Gastrocnemius medialis (tissue), 4 donors: ENCODE measurements at regions of chr21 and their contacts with region 1.

Region 1: GRCh38 chr21:38355992-38356797 is 99.4 kb downstream of the KCNJ15 start:
- DNase-seq: peak; percentile 22 to 29
- ATAC-seq: peak; percentile 34 to 55
- H3K4me3 ChIP-seq: no peak overlapping the region
- H3K27ac ChIP-seq: no peak overlapping the region
- H3K4me1 ChIP-seq: no peaks in the 10 kb centered on the region
- H3K27me3 ChIP-seq: peaks cover 0 to 6% (median 0%) of the 10 kb centered on the region in 3 donors
- CTCF ChIP-seq: peak; percentile 62 to 88 (median 80)
- POLR2A ChIP-seq: no peak

Region 2: GRCh38 chr21:37509802-37510393 is 846.3 kb before region 1 on chr21:
- in situ Hi-C with region 1: no loop called
- intact Hi-C with region 1: loop called (anchors 5 kb)
- DNase-seq: no peak
- ATAC-seq: peak in 1 of 2 donors; percentile 42
- H3K4me3 ChIP-seq: no peak overlapping the region
- H3K27ac ChIP-seq: peak overlapping the region; percentile 8 to 50 (median 22)
- H3K4me1 ChIP-seq: peaks cover 5 to 10% of the 10 kb centered on the region in 2 donors
- H3K27me3 ChIP-seq: no peaks in the 10 kb centered on the region
- CTCF ChIP-seq: no peak
- POLR2A ChIP-seq: no peak

Region 3: DNA sequence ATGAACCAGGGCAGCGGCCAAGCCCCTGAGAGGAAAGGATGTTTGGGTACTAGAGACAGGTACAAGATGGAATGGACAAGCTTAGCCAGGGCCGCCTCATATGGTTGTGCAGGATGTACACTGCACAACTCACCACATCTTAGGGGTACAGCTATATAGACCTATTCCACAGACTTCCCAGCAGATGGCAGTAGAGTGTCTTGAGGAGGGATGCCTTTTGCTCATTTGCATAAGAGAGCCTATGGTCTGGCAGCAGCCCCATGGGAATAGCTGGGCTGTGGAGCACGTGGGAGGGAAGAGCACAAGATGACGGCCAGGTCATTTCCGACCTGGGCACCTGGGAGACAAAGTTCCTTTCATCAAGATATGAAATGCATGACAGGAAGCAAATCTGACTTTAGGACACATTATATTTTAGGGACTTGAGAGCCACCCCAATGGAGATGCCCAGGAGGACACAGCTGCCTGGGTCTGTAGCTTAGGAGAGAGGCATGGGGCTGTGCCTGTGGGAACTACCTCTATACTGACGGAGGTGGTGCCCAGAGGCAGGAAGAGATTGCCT is 655.5 kb before region 1 on chr21:
- in situ Hi-C with region 1: loop called in 3 of 4 experiments (anchors 25 kb)
- intact Hi-C with region 1: no loop called
- DNase-seq: no peak
- ATAC-seq: peak in 1 of 2 donors; percentile 39
- H3K4me3 ChIP-seq: no peak overlapping the region
- H3K27ac ChIP-seq: no peak overlapping the region
- H3K4me1 ChIP-seq: no peaks in the 10 kb centered on the region
- H3K27me3 ChIP-seq: no peaks in the 10 kb centered on the region
- CTCF ChIP-seq: peak in 4 of 5 experiments; percentile 19 to 33 (median 31)
- POLR2A ChIP-seq: no peak

Region 4: DNA sequence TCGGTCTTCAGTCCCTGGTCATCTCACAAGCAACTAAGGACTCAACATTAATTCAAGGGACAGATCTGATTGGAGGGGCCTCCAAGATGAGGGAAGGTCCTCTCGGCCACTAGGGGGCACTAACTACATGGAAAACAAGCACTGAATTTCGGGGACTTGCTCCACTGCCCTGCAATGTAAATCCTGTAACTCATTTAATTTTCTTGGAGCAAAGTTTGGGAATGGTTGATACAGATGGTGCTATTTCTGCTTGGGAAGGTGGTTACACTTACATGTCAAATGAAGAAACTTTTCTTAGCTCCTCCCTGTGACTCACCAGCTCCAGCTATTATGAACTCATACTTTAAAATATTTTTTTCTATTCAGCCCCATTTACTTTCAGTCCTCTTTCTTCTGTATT is 196.8 kb before region 1 on chr21:
- in situ Hi-C with region 1: loop called in 2 of 4 experiments (anchors 5 kb)
- intact Hi-C with region 1: loop called (anchors 5 kb)
- DNase-seq: no peak
- ATAC-seq: no peak
- H3K4me3 ChIP-seq: no peak overlapping the region
- H3K27ac ChIP-seq: no peak overlapping the region
- H3K4me1 ChIP-seq: no peaks in the 10 kb centered on the region
- H3K27me3 ChIP-seq: peaks cover 0 to 4% (median 0%) of the 10 kb centered on the region in 3 donors
- CTCF ChIP-seq: peak; percentile 23 to 65 (median 37)
- POLR2A ChIP-seq: no peak

Region 5: DNA sequence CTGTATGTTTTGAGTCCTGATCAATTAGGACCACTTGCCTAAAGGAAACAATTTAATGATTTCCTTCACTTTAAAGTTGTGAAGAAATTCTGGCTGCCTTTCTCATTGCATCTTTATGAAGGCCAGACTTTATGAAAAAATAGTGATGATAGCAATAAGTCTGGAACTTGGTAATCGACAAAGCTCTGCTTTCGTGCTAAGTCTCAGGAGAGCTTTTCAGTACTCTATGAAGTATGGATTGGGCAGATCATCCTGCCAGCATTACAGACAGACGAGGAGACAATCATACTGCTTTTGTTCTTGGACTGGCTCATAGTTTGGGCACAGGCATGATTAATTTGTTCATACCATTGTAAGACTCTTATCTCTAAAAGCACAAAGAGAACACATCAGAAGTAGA is 144.9 kb before region 1 on chr21:
- in situ Hi-C with region 1: loop called (anchors 5 to 10 kb)
- intact Hi-C with region 1: no loop called
- DNase-seq: no peak
- ATAC-seq: no peak
- H3K4me3 ChIP-seq: no peak overlapping the region
- H3K27ac ChIP-seq: no peak overlapping the region
- H3K4me1 ChIP-seq: no peaks in the 10 kb centered on the region
- H3K27me3 ChIP-seq: peaks cover 0 to 7% (median 0%) of the 10 kb centered on the region in 3 donors
- CTCF ChIP-seq: no peak
- POLR2A ChIP-seq: no peak